PC-9 (cell line): ENCODE measurements at regions of chr1 and their contacts with region 1.

Region 1: DNA sequence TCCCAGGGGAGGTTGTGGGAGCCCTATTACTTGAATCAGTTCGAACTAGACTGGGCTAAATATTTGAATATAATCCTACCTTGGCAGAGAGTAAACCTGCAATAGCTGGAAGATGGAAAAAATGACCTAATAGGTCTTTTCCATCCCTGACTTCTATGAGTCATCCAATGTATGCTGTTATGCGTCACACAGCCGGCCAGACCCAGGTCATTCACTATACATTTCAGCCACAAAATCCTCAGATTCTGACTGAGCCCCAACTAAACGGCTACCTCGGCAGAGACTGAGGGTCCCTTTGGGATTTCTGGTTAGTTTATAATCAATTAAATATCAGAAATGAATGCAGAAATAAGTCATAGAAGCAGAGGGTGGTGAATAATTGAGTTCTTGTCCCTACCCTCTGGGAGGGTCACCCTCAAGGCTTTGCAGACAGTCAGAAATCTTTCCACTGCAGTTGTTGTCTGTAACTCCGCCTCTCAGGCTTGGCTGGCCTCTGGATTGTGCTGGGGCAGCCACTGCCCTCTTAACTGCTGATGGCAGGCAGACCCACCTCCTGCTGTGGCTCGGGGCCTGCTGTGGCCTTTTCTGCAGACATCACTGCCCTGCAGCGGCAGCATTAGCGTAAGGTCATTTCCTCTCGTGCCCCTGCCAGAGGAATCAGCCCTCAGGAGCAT is 240.5 kb downstream of the TGFB2 start:
- DNase-seq: peak; percentile 63 to 91
- H3K4me3 ChIP-seq: no peak overlapping the region
- H3K27ac ChIP-seq: peak overlapping the region; percentile 67
- H3K4me1 ChIP-seq: peaks cover 22% of the 10 kb centered on the region
- H3K27me3 ChIP-seq: no peaks in the 10 kb centered on the region
- CTCF ChIP-seq: no peak

Region 2: GRCh38 chr1:218361298-218362065 is 224.2 kb before region 1 on chr1:
- CTCF ChIA-PET with region 1: no interaction called
- POLR2A ChIA-PET with region 1: no interaction called
- intact Hi-C with region 1: loop called (anchors 5 kb)
- DNase-seq: no peak
- H3K4me3 ChIP-seq: no peak overlapping the region
- H3K27ac ChIP-seq: no peak overlapping the region
- H3K4me1 ChIP-seq: 0 out of 2 replicates have a peak, but pooled peaks cover 6% of the 10 kb centered on the region
- H3K27me3 ChIP-seq: no peaks in the 10 kb centered on the region
- CTCF ChIP-seq: peak; percentile 52

Region 3: GRCh38 chr1:218459878-218460711 is 125.6 kb before region 1 on chr1:
- CTCF ChIA-PET with region 1: interaction called, 3 read pairs
- POLR2A ChIA-PET with region 1: no interaction called
- intact Hi-C with region 1: loop called (anchors 1 kb)
- DNase-seq: peak; percentile 68 to 93
- H3K4me3 ChIP-seq: no peak overlapping the region
- H3K27ac ChIP-seq: peak overlapping the region; percentile 63
- H3K4me1 ChIP-seq: peaks cover 14% of the 10 kb centered on the region
- H3K27me3 ChIP-seq: no peaks in the 10 kb centered on the region
- CTCF ChIP-seq: no peak

Region 4: GRCh38 chr1:218537122-218537904 is 48.3 kb before region 1 on chr1:
- CTCF ChIA-PET with region 1: no interaction called
- POLR2A ChIA-PET with region 1: no interaction called
- intact Hi-C with region 1: loop called (anchors 5 kb)
- DNase-seq: peak in 1 of 2 experiments; percentile 80
- H3K4me3 ChIP-seq: no peak overlapping the region
- H3K27ac ChIP-seq: peak overlapping the region; percentile 67
- H3K4me1 ChIP-seq: peaks cover 24% of the 10 kb centered on the region
- H3K27me3 ChIP-seq: no peaks in the 10 kb centered on the region
- CTCF ChIP-seq: no peak

Region 5: GRCh38 chr1:218547901-218548730 is 37.5 kb before region 1 on chr1:
- CTCF ChIA-PET with region 1: no interaction called
- POLR2A ChIA-PET with region 1: no interaction called
- intact Hi-C with region 1: no loop called
- DNase-seq: no peak
- H3K4me3 ChIP-seq: no peak overlapping the region
- H3K27ac ChIP-seq: no peak overlapping the region
- H3K4me1 ChIP-seq: no peaks in the 10 kb centered on the region
- H3K27me3 ChIP-seq: no peaks in the 10 kb centered on the region
- CTCF ChIP-seq: no peak

Region 6: GRCh38 chr1:218674280-218674773 is 88.7 kb after region 1 on chr1:
- CTCF ChIA-PET with region 1: interaction called, 14 read pairs
- POLR2A ChIA-PET with region 1: no interaction called
- intact Hi-C with region 1: loop called (anchors 1 kb)
- DNase-seq: peak; percentile 90 to 92
- H3K4me3 ChIP-seq: no peak overlapping the region
- H3K27ac ChIP-seq: no peak overlapping the region
- H3K4me1 ChIP-seq: 0 out of 2 replicates have a peak, but pooled peaks cover 13% of the 10 kb centered on the region
- H3K27me3 ChIP-seq: no peaks in the 10 kb centered on the region
- CTCF ChIP-seq: no peak

Region 7: GRCh38 chr1:219566951-219567947 is 981.6 kb after region 1 on chr1:
- CTCF ChIA-PET with region 1: no interaction called
- POLR2A ChIA-PET with region 1: no interaction called
- intact Hi-C with region 1: loop called (anchors 10 kb)
- DNase-seq: no peak
- H3K4me3 ChIP-seq: no peak overlapping the region
- H3K27ac ChIP-seq: no peak overlapping the region
- H3K4me1 ChIP-seq: peaks cover 19% of the 10 kb centered on the region
- H3K27me3 ChIP-seq: no peaks in the 10 kb centered on the region
- CTCF ChIP-seq: peak; percentile 65